RWPE1 (cell line): ENCODE measurements at regions of chr22 and their contacts with region 1.

Region 1: GRCh38 chr22:50323900-50324299 is 2.9 kb downstream of the DENND6B start:
- DNase-seq: no peak
- H3K27ac ChIP-seq: no peak overlapping the region
- CTCF ChIP-seq: no peak

Region 2: GRCh38 chr22:50301581-50302541 is 22.0 kb before region 1 on chr22:
- CTCF ChIA-PET with region 1: interaction called, 7 read pairs
- POLR2A ChIA-PET with region 1: interaction called, 10 read pairs
- DNase-seq: no peak
- H3K27ac ChIP-seq: peak overlapping the region; percentile 100
- CTCF ChIP-seq: no peak

Region 3: GRCh38 chr22:50341977-50342650 is 18.2 kb after region 1 on chr22:
- CTCF ChIA-PET with region 1: no interaction called
- POLR2A ChIA-PET with region 1: no interaction called
- DNase-seq: peak; percentile 51
- H3K27ac ChIP-seq: peak overlapping the region; percentile 92
- CTCF ChIP-seq: peak; percentile 97

Region 4: DNA sequence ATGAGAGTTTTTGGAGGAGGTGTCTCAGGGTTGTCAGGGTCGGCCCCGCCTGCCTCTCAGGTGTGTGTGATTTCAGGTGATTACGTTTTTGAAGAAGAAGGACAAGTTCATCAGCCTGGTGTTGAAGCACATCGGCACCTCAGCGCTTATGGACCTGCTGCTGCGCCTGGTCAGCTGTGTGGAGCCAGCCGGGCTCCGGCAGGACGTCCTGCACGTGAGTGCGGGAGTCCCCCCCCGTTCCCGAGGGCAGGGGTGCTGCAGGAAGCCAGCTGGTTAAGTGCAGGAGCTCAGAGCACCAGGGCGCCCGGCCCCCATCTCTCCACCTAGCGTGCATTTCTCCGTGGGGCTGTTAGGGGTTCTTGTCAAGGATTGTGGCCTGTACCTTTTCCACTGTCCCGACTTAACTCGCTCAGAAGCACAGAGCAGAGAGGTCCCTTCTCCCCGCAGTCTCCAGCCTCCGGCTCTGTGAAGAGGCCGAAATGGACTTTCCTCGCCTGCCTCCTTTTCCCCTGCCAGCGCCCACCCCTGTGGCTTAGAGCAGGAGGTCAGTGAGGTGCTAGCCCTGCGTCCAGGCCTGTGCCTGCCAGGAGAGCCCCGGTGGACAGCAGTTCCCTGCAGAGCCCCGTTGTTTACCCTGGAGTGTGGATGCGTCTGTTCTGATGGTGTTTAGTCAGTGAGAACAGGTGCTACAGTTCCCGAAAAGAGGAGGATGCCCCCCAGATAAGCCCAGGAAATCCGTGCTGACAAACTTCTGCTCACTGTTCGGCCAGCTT is 90.8 kb after region 1 on chr22:
- CTCF ChIA-PET with region 1: no interaction called
- POLR2A ChIA-PET with region 1: no interaction called
- DNase-seq: no peak
- H3K27ac ChIP-seq: 0 out of 2 replicates have a peak overlapping the region, but pooled peaks have one; percentile 5
- CTCF ChIP-seq: no peak

Region 5: GRCh38 chr22:50459496-50460140 is 135.7 kb after region 1 on chr22:
- CTCF ChIA-PET with region 1: no interaction called
- POLR2A ChIA-PET with region 1: no interaction called
- DNase-seq: no peak
- H3K27ac ChIP-seq: peak overlapping the region; percentile 28
- CTCF ChIP-seq: no peak